Activated CD8-positive, alpha-beta T cell treated with anti-CD3 and anti-CD28 coated beads, Interleukin-2, amount 10 ng/mL, durations not matched to agents 7 days and 5 days (primary cell): ENCODE measurements at regions of chr5 and their contacts with region 1.

Region 1: DNA sequence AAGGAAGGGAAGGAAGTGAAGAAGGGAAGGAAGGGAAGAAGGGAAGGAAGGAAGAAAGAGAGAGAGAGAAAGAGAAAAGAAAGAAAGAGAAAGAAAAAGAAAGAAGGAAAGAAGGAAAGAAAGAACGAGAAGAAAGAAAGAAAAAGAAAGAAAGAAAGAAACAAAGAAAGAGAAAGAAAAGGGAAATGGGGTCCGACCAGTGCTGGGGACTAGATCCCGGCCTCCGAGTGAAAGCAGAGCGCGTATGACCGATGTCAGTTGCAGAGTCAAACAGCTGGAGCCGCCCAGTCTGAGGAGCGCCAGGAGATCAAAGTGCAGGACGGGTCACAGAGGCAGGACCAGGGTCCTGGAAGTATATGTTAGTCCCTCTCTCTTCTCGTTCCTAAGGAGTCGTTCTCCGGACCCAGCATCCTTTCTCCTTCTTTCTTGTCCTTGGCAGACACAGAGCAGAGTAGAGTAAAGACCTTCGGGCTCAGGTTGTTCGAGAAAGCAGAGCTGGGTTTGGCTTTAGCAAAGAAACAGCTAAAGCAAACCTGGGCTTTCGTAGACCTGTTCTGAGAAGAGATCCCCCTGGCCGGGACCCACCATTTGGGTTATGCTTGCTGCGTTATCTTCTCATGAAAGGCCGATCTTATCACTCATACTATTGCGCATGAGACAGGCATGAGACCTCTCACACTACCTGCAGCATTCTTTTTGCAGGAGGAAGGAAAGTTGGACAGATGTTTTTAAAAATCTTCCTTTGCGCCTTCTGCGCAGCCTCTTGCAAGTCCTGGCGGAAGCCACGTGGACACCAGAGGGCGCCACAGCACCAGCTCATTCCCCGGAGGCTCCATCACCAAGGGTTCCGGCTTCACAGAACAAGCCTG is 305.2 kb upstream of the MSX2 start:
- DNase-seq: peak; percentile 87
- ATAC-seq: peak; percentile 88
- H3K4me3 Mint-ChIP-seq: no peak overlapping the region
- H3K27ac Mint-ChIP-seq: no peak overlapping the region
- H3K4me1 Mint-ChIP-seq: peaks cover 10% of the 10 kb centered on the region
- H3K27me3 Mint-ChIP-seq: peaks cover 2% of the 10 kb centered on the region

Region 2: GRCh38 chr5:174320052-174320451 is 99.1 kb before region 1 on chr5:
- CTCF ChIA-PET with region 1: no interaction called
- POLR2A ChIA-PET with region 1: no interaction called
- DNase-seq: no peak
- ATAC-seq: no peak
- H3K4me3 Mint-ChIP-seq: no peak overlapping the region
- H3K27ac Mint-ChIP-seq: no peak overlapping the region
- H3K4me1 Mint-ChIP-seq: no peaks in the 10 kb centered on the region
- H3K27me3 Mint-ChIP-seq: peaks cover 6% of the 10 kb centered on the region

Region 3: GRCh38 chr5:174431504-174431903 is 12.3 kb after region 1 on chr5:
- CTCF ChIA-PET with region 1: interaction called, 15 read pairs
- POLR2A ChIA-PET with region 1: no interaction called
- DNase-seq: no peak
- ATAC-seq: no peak
- H3K4me3 Mint-ChIP-seq: no peak overlapping the region
- H3K27ac Mint-ChIP-seq: no peak overlapping the region
- H3K4me1 Mint-ChIP-seq: no peaks in the 10 kb centered on the region
- H3K27me3 Mint-ChIP-seq: no peaks in the 10 kb centered on the region

Region 4: DNA sequence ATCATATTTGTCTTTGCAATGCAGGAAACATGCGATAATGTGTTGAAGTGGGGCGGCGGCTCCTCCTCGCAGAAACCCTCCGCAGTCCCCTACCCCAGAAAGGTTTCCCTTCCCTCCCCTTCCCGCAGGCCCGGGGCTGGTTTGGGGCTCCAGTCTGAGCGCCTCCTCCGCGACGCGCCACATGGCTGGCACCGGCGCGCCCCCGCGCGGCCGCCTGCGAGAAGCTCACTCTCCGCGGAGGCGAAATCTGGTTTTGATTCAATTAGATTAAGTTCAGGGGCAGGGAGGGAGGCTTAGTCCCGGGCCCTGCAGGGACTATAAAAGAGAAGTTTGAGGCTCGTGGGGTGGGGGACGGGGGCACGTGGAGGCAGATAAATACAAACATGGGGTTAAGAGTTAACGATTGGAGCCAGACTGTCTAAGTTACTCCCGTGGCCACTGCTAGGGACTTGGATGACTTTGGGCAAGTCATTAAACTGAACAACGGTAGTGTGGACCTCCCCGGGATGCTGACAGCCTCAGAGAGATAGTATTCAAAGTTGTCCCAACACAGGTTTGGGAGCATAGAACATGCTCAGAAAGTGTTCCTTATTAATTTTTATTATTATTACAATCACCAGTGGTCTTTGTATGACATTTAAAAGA is 374.6 kb after region 1 on chr5:
- CTCF ChIA-PET with region 1: interaction called, 64 read pairs
- POLR2A ChIA-PET with region 1: no interaction called
- DNase-seq: peak; percentile 59
- ATAC-seq: peak; percentile 82
- H3K4me3 Mint-ChIP-seq: no peak overlapping the region
- H3K27ac Mint-ChIP-seq: no peak overlapping the region
- H3K4me1 Mint-ChIP-seq: no peaks in the 10 kb centered on the region
- H3K27me3 Mint-ChIP-seq: peaks cover 11% of the 10 kb centered on the region

Region 5: GRCh38 chr5:174807471-174807870 is 388.3 kb after region 1 on chr5:
- CTCF ChIA-PET with region 1: no interaction called
- POLR2A ChIA-PET with region 1: no interaction called
- DNase-seq: no peak
- ATAC-seq: no peak
- H3K4me3 Mint-ChIP-seq: no peak overlapping the region
- H3K27ac Mint-ChIP-seq: no peak overlapping the region
- H3K4me1 Mint-ChIP-seq: no peaks in the 10 kb centered on the region
- H3K27me3 Mint-ChIP-seq: no peaks in the 10 kb centered on the region